ENCODE measurements at regions of chr4 and their contacts with region 1.

Region 1: GRCh38 chr4:134906404-134907023 is 704.9 kb upstream of the PABPC4L start:
- DNase-seq: no peak
- H3K4me3 ChIP-seq: no peak overlapping the region
- H3K27ac ChIP-seq: no peak overlapping the region
- H3K4me1 ChIP-seq: no peaks in the 10 kb centered on the region
- H3K27me3 ChIP-seq: no peaks in the 10 kb centered on the region
- CTCF ChIP-seq: peak in 1 of 3 experiments; percentile 34
- POLR2A ChIP-seq: no peak

Region 2: GRCh38 chr4:133148690-133149363 is 1757.7 kb before region 1 on chr4 and contains the start of gene PCDH10:
- intact Hi-C with region 1: loop called (anchors 5 kb)
- DNase-seq: peak; percentile 90 to 94
- H3K4me3 ChIP-seq: peak within 1 kb of the TSS; percentile 42 to 55
- H3K27ac ChIP-seq: peak within 1 kb of the TSS; percentile 28
- H3K4me1 ChIP-seq: peaks cover 60% of the 10 kb centered on the region
- H3K27me3 ChIP-seq: peaks cover 10% of the 10 kb centered on the region
- CTCF ChIP-seq: no peak
- POLR2A ChIP-seq: peak in 1 of 2 donors; percentile 59
- total RNA-seq, gene PCDH10: 6.9 TPM

Region 3: GRCh38 chr4:133972586-133972985 is 933.9 kb before region 1 on chr4:
- intact Hi-C with region 1: loop called (anchors 5 kb)
- DNase-seq: no peak
- H3K4me3 ChIP-seq: no peak overlapping the region
- H3K27ac ChIP-seq: no peak overlapping the region
- H3K4me1 ChIP-seq: no peaks in the 10 kb centered on the region
- H3K27me3 ChIP-seq: no peaks in the 10 kb centered on the region
- CTCF ChIP-seq: no peak
- POLR2A ChIP-seq: no peak